ENCODE measurements at regions of chr4 and their contacts with region 1.

Region 1: DNA sequence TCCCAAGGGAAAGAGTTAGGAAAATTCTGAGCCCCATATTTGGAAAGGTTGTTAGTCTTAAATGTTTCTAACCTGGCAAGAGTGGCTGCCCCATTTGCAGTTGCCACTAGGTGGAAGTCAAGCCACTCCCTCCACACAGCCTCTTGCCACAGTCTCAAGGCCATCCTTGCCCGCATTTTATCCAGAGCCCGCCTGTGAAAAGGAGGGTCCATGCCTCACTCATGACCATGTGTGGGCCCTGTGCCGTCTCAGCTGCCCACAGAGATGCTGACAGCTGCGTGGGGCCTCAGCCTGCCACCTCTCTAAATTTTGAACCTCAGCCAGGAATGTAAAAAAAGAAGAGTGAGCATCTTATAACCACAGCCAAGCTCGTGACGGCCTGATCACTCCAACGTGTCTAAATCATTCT is 201.5 kb upstream of the FAM241A start:
- DNase-seq: peak; percentile 40
- CTCF ChIP-seq: peak; percentile 77

Region 2: GRCh38 chr4:111618908-111619307 is 324.9 kb before region 1 on chr4:
- in situ Hi-C with region 1: no loop called
- DNase-seq: no peak
- CTCF ChIP-seq: no peak

Region 3: GRCh38 chr4:112031712-112032328 is 88.0 kb after region 1 on chr4:
- in situ Hi-C with region 1: loop called (anchors 10 kb)
- DNase-seq: peak; percentile 39
- CTCF ChIP-seq: peak; percentile 76